ENCODE measurements at regions of chr1 and their contacts with region 1.

Region 1: DNA sequence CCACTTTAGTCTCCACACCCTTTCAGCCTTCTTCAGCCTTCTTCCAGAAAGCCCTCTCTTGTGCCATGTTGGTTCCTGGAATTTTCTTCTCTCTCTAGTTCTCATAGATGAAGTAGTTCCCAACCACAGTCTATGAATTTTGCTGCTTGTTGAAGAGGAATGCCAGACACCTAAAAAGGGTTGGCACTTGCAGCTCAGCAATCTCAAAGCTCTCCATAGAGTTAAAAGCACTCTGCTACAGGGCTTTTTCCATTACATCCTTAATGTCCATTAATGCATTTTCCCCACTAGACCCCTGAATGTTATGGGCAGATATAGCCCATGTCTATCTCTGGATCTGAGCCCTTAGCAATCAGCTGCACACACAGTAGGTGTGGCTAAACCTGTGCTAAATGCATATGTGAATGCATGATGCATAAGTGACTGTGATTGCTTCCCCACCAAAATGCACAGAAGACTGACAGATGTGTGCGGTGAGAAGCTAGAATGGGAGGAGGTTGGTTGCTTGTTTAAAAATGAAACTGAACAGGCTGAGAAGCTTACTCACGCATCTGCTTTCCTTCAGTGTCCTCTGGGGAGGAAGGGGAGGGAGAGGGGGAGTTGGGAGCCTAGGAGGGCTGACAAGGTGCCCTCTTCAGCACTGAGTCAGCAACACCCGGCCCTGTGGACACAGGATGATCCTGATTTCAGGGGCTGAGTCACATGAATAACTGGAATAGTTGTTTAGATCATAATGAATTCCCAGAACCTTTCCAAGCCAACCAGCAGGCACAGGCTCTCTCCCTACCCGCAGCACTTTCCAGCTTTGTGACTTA is 146.1 kb upstream of the FGGY start:
- DNase-seq: peak; percentile 19
- H3K4me3 Mint-ChIP-seq: no peak overlapping the region
- H3K27ac Mint-ChIP-seq: no peak overlapping the region
- H3K4me1 Mint-ChIP-seq: peaks cover 26% of the 10 kb centered on the region
- H3K27me3 Mint-ChIP-seq: no peaks in the 10 kb centered on the region

Region 2: GRCh38 chr1:59296358-59297256 is 145.8 kb after region 1 on chr1 and contains the start of gene FGGY:
- intact Hi-C with region 1: loop called (anchors 10 kb)
- DNase-seq: peak; percentile 85
- H3K4me3 Mint-ChIP-seq: peak within 1 kb of the TSS; percentile 93
- H3K27ac Mint-ChIP-seq: peak within 1 kb of the TSS; percentile 88
- H3K4me1 Mint-ChIP-seq: peaks cover 36% of the 10 kb centered on the region
- H3K27me3 Mint-ChIP-seq: no peaks in the 10 kb centered on the region
- total RNA-seq, gene FGGY: 10.5 and 13.4 TPM in 2 replicates

Region 3: GRCh38 chr1:59393211-59394180 is 242.7 kb after region 1 on chr1:
- intact Hi-C with region 1: loop called (anchors 5 kb)
- DNase-seq: no peak
- H3K4me3 Mint-ChIP-seq: no peak overlapping the region
- H3K27ac Mint-ChIP-seq: peak overlapping the region; percentile 52
- H3K4me1 Mint-ChIP-seq: peaks cover 55% of the 10 kb centered on the region
- H3K27me3 Mint-ChIP-seq: no peaks in the 10 kb centered on the region